Heart right ventricle (tissue), 16 donors: ENCODE measurements at regions of chr13 and their contacts with region 1.

Region 1: DNA sequence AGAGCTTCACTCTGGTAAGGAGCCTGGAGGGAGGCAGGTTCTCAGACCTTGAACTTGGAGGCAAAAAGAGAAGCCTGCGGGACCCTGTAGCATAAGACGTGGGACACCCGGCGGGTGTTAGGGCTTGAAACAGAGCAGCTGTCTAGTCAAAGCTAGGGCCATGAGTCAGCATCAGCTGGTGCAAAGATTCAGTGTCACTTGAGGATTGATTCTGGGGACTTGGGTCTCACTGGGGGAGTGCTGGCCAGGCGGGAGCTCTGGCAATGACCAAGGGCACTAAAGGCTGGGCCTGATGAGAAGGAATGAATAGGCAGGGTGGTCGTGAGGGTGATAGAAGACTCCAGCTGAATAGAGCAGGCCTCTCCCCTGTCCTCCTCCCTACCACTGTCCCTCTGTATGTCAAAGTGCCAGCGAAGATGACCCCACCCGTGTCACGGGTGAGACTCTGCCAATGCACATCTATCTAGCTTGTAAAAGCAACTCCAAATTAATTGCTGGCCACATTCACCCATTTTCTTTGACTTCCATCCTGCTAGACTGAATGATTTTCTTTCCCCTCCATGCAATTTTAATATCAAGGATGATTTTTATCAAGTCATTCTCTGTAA is 97.1 kb downstream of the MBNL2 start:
- DNase-seq: peak in 1 of 2 donors; percentile 31
- ATAC-seq: peak; percentile 23 to 75 (median 56)
- H3K4me3 ChIP-seq: no peak overlapping the region
- H3K27ac ChIP-seq: peak overlapping the region in 9 of 10 donors; percentile 14 to 72 (median 53)
- H3K4me1 ChIP-seq: peaks cover 6 to 98% (median 68%) of the 10 kb centered on the region in 9 donors
- H3K27me3 ChIP-seq: no peaks in the 10 kb centered on the region
- CTCF ChIP-seq: no peak

Region 2: DNA sequence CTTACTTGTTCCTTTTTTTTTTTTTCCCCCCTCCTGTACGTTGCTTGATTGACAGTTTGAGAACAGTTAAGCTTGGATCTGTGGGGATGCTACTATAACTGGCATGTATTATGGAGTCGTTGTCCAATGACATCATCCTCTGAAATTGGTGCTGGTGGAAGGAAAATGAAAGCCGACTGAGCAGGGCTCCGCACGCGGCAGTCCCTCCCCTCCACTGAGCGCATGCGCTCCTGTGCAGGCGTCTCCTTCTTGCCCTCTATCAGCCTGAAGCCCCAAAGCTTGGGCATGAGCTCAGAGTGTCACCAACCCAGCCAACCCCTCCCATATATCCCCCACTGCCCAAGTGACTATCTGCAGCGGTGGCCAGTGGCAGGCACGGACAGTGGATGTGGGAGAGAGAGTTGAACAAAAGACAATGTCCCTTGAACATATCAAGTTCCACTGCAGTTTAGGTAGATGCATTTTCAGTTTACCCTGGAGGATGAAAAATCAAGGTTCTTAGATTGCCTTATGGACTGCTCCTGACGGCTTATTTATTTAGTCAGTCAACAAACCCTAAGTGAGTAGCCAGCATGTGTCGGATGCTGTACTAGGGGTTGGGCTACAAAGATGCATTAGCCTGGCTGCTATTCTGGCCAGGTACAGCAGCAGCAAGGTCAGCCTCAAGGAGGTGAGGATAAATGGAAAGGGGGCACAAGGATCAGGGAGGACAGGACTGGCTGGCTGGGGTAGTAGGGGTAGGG is 76.3 kb before region 1 on chr13:
- intact Hi-C with region 1: loop called in 1 of 10 experiments (anchors 5 kb)
- DNase-seq: peak in 1 of 2 donors; percentile 50
- ATAC-seq: peak; percentile 24 to 64 (median 34)
- H3K4me3 ChIP-seq: peak overlapping the region in 1 of 10 donors; percentile 12
- H3K27ac ChIP-seq: peak overlapping the region; percentile 21 to 88 (median 70)
- H3K4me1 ChIP-seq: peaks cover 26 to 100% (median 97%) of the 10 kb centered on the region in 9 donors
- H3K27me3 ChIP-seq: no peaks in the 10 kb centered on the region
- CTCF ChIP-seq: no peak